ENCODE measurements at regions of chr12 and their contacts with region 1.

Region 1: DNA sequence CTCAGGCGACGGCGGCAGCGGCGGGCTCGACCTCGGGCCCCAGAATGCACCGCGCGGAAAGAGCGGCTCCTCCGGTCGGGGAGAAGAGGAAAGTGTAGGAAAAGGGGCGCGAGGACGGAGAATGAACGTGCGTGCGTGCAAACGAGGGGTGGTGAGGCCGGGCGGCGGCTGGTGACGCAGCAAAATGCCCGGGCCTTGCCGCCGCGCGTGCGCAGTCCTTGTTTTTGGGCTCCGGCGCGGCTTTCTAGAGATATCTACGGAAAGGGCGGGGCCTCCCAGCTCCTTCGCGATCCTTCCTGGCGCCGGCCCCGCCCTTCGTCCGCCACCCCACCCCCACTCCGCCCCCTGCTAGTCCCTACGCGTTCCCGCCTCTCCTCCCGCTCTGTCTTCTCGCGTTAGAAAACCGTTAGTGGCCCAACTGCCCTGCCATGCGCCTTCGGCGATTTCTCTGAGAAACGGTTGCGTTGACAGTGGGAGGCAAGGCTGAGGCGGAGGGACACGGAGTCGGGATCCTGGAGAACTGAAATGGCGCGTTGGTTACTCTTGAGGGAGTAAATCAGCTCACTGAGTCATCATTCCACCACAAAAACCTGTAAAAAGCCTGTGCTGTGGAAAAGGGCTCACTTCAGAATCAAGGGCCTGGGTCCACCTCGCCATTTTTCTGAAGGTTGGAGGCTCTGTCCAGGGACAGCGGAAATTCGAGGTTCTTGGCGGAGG is at the start of gene PTGES3:
- DNase-seq: peak; percentile 98
- H3K4me3 ChIP-seq: peak within 1 kb of the TSS; percentile 40 to 68 (median 56)
- H3K27ac ChIP-seq: peak within 1 kb of the TSS; percentile 94 to 100 (median 97)
- H3K4me1 ChIP-seq: peaks cover 23 to 25% of the 10 kb centered on the region in 2 donors
- H3K27me3 ChIP-seq: no peaks in the 10 kb centered on the region
- CTCF ChIP-seq: no peak
- POLR2A ChIP-seq: peak; percentile 91 to 98
- total RNA-seq, gene PTGES3: 101 to 132 (median 124) TPM

Region 2: DNA sequence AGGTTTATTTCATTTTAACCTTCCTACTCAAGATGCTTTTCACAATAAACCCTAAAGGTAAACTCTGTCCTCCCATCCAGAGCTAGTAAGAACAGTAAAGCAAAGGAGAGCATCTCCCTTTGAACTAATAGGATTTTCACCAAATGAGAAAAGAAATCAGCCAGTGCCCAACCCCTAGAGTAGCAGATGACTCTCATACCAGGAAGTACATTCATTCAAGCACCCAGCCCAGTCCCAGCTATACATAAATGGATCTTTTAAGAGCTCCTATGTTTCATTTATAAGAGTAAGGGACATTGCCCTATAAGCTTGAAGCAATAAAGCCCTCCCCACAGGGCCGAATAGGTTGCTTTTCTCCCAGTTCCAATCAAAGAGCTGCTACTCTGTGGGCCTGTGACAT is 65.8 kb before region 1 on chr12:
- intact Hi-C with region 1: no loop called
- DNase-seq: no peak
- H3K4me3 ChIP-seq: no peak overlapping the region
- H3K27ac ChIP-seq: no peak overlapping the region
- H3K4me1 ChIP-seq: peaks cover 9 to 23% of the 10 kb centered on the region in 2 donors
- H3K27me3 ChIP-seq: no peaks in the 10 kb centered on the region
- CTCF ChIP-seq: no peak
- POLR2A ChIP-seq: no peak

Region 3: GRCh38 chr12:56645717-56646446 is 42.4 kb before region 1 on chr12 and contains the start of gene ATP5F1B:
- intact Hi-C with region 1: loop called (anchors 5 kb)
- DNase-seq: peak; percentile 95 to 97
- H3K4me3 ChIP-seq: peak within 1 kb of the TSS; percentile 60 to 87 (median 77)
- H3K27ac ChIP-seq: peak within 1 kb of the TSS; percentile 94 to 97 (median 95)
- H3K4me1 ChIP-seq: peaks cover 14 to 17% of the 10 kb centered on the region in 2 donors
- H3K27me3 ChIP-seq: no peaks in the 10 kb centered on the region
- CTCF ChIP-seq: peak in 1 of 6 experiments; percentile 3
- POLR2A ChIP-seq: peak; percentile 92 to 99
- total RNA-seq, gene ATP5F1B: 310 to 557 (median 431) TPM

Region 4: GRCh38 chr12:56724972-56725722 is 36.9 kb after region 1 on chr12 and contains the start of gene NACA:
- intact Hi-C with region 1: loop called (anchors 5 kb)
- DNase-seq: peak; percentile 99 to 100
- H3K4me3 ChIP-seq: peak within 1 kb of the TSS; percentile 34 to 86 (median 72)
- H3K27ac ChIP-seq: peak within 1 kb of the TSS; percentile 92 to 97 (median 95)
- H3K4me1 ChIP-seq: peaks cover 39 to 42% of the 10 kb centered on the region in 2 donors
- H3K27me3 ChIP-seq: no peaks in the 10 kb centered on the region
- CTCF ChIP-seq: no peak
- POLR2A ChIP-seq: peak; percentile 80 to 97
- total RNA-seq, gene NACA: 1,034 to 1,717 (median 1,154) TPM

Measured in thyroid gland (tissue), 4 donors.